CD8-positive, alpha-beta T cell (primary cell): ENCODE measurements at regions of chr14 and their contacts with region 1.

Region 1: DNA sequence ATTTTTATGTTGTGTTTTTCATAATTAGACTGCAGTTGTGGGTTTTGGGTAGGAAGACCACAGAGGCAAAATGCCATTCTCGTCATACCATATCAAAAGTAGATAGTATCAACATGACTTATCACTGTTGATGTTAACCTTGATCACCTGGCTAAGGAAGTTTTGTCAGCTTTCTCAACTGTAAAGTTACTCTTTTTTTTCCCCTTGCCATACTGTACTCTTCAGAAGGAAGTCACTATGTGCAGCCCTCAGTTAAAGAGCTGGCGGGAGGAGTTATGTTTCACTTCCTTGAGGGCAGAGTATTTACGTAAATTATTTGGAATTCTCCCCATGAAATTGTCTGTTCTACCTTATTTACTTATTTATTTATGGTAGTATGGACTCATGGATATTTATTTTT is 78.7 kb downstream of the PRORP start:
- DNase-seq: peak in 3 of 9 experiments; percentile 5 to 44 (median 19)
- ATAC-seq: peak; percentile 68
- H3K4me3 ChIP-seq: no peak overlapping the region
- H3K4me3 Mint-ChIP-seq: peak overlapping the region; percentile 17
- H3K27ac ChIP-seq: no peak overlapping the region
- H3K27ac Mint-ChIP-seq: peak overlapping the region; percentile 62
- H3K4me1 ChIP-seq: peaks cover 29% of the 10 kb centered on the region
- H3K4me1 Mint-ChIP-seq: peaks cover 37% of the 10 kb centered on the region
- H3K27me3 ChIP-seq: no peaks in the 10 kb centered on the region
- H3K27me3 Mint-ChIP-seq: no peaks in the 10 kb centered on the region
- CTCF ChIP-seq: no peak

Region 2: GRCh38 chr14:35032562-35032961 is 168.5 kb before region 1 on chr14:
- CTCF ChIA-PET with region 1: no interaction called
- POLR2A ChIA-PET with region 1: no interaction called
- intact Hi-C with region 1: no loop called
- DNase-seq: no peak
- ATAC-seq: no peak
- H3K4me3 ChIP-seq: no peak overlapping the region
- H3K4me3 Mint-ChIP-seq: no peak overlapping the region
- H3K27ac ChIP-seq: no peak overlapping the region
- H3K27ac Mint-ChIP-seq: no peak overlapping the region
- H3K4me1 ChIP-seq: no peaks in the 10 kb centered on the region
- H3K4me1 Mint-ChIP-seq: no peaks in the 10 kb centered on the region
- H3K27me3 ChIP-seq: no peaks in the 10 kb centered on the region
- H3K27me3 Mint-ChIP-seq: no peaks in the 10 kb centered on the region
- CTCF ChIP-seq: no peak

Region 3: GRCh38 chr14:35167496-35167895 is 33.6 kb before region 1 on chr14:
- CTCF ChIA-PET with region 1: no interaction called
- POLR2A ChIA-PET with region 1: no interaction called
- intact Hi-C with region 1: loop called in 1 of 2 experiments (anchors 5 kb)
- DNase-seq: no peak
- ATAC-seq: no peak
- H3K4me3 ChIP-seq: no peak overlapping the region
- H3K4me3 Mint-ChIP-seq: no peak overlapping the region
- H3K27ac ChIP-seq: no peak overlapping the region
- H3K27ac Mint-ChIP-seq: no peak overlapping the region
- H3K4me1 ChIP-seq: no peaks in the 10 kb centered on the region
- H3K4me1 Mint-ChIP-seq: peaks cover 6% of the 10 kb centered on the region
- H3K27me3 ChIP-seq: no peaks in the 10 kb centered on the region
- H3K27me3 Mint-ChIP-seq: no peaks in the 10 kb centered on the region
- CTCF ChIP-seq: no peak

Region 4: GRCh38 chr14:35218963-35219362 is 17.9 kb after region 1 on chr14:
- CTCF ChIA-PET with region 1: no interaction called
- POLR2A ChIA-PET with region 1: no interaction called
- intact Hi-C with region 1: no loop called
- DNase-seq: no peak
- ATAC-seq: no peak
- H3K4me3 ChIP-seq: no peak overlapping the region
- H3K4me3 Mint-ChIP-seq: no peak overlapping the region
- H3K27ac ChIP-seq: no peak overlapping the region
- H3K27ac Mint-ChIP-seq: no peak overlapping the region
- H3K4me1 ChIP-seq: no peaks in the 10 kb centered on the region
- H3K4me1 Mint-ChIP-seq: peaks cover 12% of the 10 kb centered on the region
- H3K27me3 ChIP-seq: no peaks in the 10 kb centered on the region
- H3K27me3 Mint-ChIP-seq: no peaks in the 10 kb centered on the region
- CTCF ChIP-seq: no peak